Activated CD4-positive, alpha-beta T cell treated with anti-CD3 and anti-CD28 coated beads, Interleukin-2, amount 10 ng/mL, durations not matched to agents 24 days and 14 days (primary cell): ENCODE measurements at regions of chr13 and their contacts with region 1.

Region 1: GRCh38 chr13:98576963-98577822 is at the start of gene STK24:
- DNase-seq: peak; percentile 92
- H3K4me3 Mint-ChIP-seq: peak within 1 kb of the TSS; percentile 98
- H3K27ac Mint-ChIP-seq: peak within 1 kb of the TSS; percentile 94
- H3K4me1 Mint-ChIP-seq: peaks cover 43% of the 10 kb centered on the region
- H3K27me3 Mint-ChIP-seq: no peaks in the 10 kb centered on the region
- total RNA-seq, gene STK24: 127 and 136 TPM in 2 replicates

Region 2: GRCh38 chr13:98466634-98467236 is 110.5 kb before region 1 on chr13:
- intact Hi-C with region 1: no loop called
- DNase-seq: peak; percentile 78
- H3K4me3 Mint-ChIP-seq: no peak overlapping the region
- H3K27ac Mint-ChIP-seq: peak overlapping the region; percentile 25
- H3K4me1 Mint-ChIP-seq: peaks cover 24% of the 10 kb centered on the region
- H3K27me3 Mint-ChIP-seq: no peaks in the 10 kb centered on the region

Region 3: DNA sequence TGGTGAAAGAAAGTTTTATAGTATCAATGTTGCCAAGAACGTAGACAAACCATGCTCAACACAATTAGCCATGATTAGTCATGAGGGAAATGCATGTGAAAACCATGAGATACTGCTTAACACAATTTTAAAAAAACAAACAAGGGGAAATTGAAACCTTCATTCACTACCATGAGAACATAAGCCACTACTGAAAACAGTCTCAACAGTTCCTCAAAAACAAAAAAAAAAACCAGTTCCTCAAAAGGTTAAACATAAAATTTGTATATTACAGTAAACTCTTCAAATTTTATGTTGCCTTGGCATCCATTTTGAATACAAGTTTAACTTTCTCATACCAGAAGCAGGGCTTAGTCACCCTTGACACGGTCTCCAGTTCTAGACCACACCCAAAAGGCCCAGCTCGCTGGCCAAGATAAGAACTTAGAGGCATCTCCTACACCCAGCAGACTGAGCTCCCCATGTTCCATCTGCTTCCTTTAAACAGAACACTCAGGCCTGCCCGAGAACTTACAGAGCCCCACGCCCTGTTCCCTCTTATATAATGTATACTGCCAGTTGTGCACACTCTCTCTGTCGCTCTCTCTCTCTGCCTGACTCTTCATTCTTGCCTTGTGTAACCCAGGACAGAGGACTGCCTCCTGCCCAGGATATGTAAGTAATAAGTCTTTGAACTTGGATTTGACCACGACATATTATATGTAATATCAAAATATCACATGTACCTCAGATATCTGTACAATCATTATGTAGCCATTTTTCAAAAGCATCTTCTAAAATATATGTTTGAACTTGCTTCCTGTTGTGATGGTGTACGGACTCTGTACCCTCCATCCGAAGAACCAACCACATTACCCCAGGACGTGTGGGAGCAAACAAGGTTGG is 67.7 kb before region 1 on chr13:
- intact Hi-C with region 1: loop called (anchors 1 kb)
- DNase-seq: peak; percentile 80
- H3K4me3 Mint-ChIP-seq: peak overlapping the region; percentile 54
- H3K27ac Mint-ChIP-seq: peak overlapping the region; percentile 89
- H3K4me1 Mint-ChIP-seq: peaks cover 74% of the 10 kb centered on the region
- H3K27me3 Mint-ChIP-seq: no peaks in the 10 kb centered on the region

Region 4: DNA sequence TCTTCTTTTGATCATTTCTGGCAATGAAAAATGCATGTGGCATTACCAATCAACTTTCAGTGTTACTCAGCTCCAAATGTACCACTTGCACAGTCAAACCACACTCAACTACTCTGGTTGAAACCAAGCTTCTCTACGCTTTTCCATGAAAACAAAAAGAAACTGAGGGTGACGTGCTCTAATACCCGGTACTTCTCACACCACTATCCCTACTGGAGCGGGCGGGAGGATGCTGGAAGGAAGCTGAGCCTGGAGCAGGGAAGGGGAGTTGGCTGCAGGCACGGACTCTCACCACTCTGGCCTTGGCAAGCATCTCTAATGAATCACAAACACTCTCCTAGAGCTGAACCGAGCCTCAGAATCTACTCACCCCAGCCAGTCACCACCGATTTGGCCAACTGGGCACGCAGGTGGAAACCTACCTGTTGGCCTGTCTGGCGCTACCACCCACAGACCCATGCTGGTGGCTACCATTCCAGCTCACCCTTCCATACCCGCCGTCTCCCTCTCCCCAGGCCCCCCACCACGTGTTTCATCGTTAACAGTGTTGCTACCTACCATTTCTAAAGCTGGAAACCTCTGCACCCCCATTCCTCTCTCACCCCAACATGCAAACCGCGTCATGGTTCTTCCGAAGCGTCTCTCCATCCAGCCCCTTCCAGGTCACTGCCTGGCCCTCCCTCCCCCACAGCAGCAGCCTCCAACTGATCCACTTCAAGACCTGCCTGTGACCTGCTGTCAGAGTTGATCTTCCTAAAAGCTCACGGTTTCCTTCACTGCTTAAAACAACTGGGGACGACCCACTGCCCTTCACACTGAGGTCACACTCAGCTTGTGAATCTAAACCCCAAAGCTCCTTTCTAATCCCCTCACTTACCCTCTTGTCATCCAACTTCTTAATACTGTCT is 48.3 kb before region 1 on chr13:
- intact Hi-C with region 1: loop called (anchors 1 kb)
- DNase-seq: no peak
- H3K4me3 Mint-ChIP-seq: peak overlapping the region; percentile 21
- H3K27ac Mint-ChIP-seq: peak overlapping the region; percentile 87
- H3K4me1 Mint-ChIP-seq: peaks cover 62% of the 10 kb centered on the region
- H3K27me3 Mint-ChIP-seq: no peaks in the 10 kb centered on the region

Region 5: GRCh38 chr13:98549006-98549727 is 28.0 kb before region 1 on chr13:
- intact Hi-C with region 1: loop called (anchors 2 kb)
- DNase-seq: no peak
- H3K4me3 Mint-ChIP-seq: peak overlapping the region; percentile 15
- H3K27ac Mint-ChIP-seq: peak overlapping the region; percentile 76
- H3K4me1 Mint-ChIP-seq: peaks cover 61% of the 10 kb centered on the region
- H3K27me3 Mint-ChIP-seq: no peaks in the 10 kb centered on the region

Region 6: DNA sequence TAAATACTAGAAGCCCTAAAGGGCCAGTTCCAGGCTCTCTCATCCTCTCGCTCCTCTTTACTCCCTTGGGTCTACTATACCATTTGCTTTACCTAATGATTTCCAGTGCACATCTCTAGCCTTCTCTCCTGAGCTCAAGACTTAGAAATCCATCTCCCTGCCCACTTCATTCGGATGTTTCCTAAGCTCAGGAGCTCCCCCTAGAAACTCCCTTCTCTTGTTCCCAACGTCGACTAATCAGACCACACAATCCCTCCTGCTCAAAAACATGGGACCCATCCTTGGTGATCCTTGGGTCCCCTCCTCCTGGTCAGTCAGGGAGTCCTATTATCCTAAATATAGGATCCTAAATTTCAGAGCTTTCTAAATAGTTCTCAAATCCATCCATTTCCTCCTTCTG is 20.9 kb after region 1 on chr13:
- intact Hi-C with region 1: loop called (anchors 1 kb)
- DNase-seq: no peak
- H3K4me3 Mint-ChIP-seq: no peak overlapping the region
- H3K27ac Mint-ChIP-seq: peak overlapping the region; percentile 51
- H3K4me1 Mint-ChIP-seq: peaks cover 14% of the 10 kb centered on the region
- H3K27me3 Mint-ChIP-seq: peaks cover 12% of the 10 kb centered on the region

Region 7: DNA sequence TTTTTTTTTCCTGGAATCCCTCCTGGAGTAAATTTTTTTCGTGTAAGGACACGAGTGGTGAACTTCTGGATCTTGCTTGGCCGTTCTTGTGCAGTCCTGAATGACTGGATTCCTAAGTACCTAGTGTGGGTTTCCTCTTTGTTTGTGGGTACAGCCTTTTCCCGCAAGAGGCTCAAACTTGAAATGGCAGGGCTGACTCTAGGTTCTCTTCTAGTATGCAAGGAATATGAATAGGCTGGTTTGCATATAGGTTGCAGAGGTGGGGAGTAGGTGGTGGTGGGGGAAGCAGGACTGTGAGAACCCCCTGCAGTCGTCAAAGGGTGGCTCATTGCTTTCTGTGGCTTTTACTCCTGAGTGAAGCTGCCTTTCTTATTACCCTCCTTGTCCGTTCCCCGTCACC is 637.0 kb after region 1 on chr13:
- intact Hi-C with region 1: loop called (anchors 10 kb)
- DNase-seq: peak; percentile 78
- H3K4me3 Mint-ChIP-seq: peak overlapping the region; percentile 83
- H3K27ac Mint-ChIP-seq: peak overlapping the region; percentile 92
- H3K4me1 Mint-ChIP-seq: peaks cover 68% of the 10 kb centered on the region
- H3K27me3 Mint-ChIP-seq: no peaks in the 10 kb centered on the region